ENCODE measurements at regions of chr3 and their contacts with region 1.

Region 1: DNA sequence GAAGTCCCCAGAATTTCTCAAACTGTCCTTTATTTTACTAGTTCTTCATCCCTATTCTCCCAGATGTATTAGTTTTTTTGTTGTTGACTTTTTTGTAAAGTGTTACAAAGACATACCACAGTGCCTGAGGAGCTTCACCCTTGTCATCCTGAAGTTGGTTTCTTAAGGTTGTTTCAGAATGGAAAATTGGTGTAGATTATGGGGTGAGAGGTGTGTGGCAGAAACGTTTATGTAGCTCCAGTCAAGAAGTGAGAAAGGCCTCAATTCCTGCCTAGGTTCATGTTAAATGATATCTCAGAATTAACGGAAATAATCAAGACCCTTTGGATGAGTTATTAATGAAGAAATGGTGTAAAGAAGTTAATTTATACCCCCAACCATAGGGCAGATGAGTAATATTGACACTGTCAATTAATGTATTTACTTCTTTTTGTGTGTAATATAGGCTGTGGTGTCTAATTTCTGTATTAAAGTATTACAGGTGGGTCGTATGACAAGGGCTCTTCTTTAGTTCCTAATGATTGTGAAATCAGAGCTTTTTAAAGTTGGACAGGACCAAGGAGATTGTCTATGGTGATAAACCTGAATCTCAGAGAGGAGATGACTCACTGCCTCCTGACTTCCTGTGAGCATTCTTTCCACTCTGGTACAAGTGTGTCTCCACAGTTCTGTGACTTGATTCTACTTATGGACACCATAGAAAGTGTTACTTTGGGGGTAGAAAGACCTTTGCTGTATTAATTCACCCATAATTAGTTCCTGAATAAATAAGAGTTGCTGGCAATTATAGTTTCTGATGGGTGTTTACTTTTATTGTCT is 7.0 kb downstream of the EDEM1 start:
- DNase-seq: peak; percentile 47
- H3K4me3 Mint-ChIP-seq: peak overlapping the region; percentile 62
- H3K27ac Mint-ChIP-seq: peak overlapping the region; percentile 94
- H3K4me1 Mint-ChIP-seq: peaks cover 85% of the 10 kb centered on the region
- H3K27me3 Mint-ChIP-seq: no peaks in the 10 kb centered on the region

Region 2: GRCh38 chr3:3443482-3443881 is 1751.1 kb before region 1 on chr3:
- intact Hi-C with region 1: no loop called
- DNase-seq: no peak
- H3K4me3 Mint-ChIP-seq: no peak overlapping the region
- H3K27ac Mint-ChIP-seq: no peak overlapping the region
- H3K4me1 Mint-ChIP-seq: no peaks in the 10 kb centered on the region
- H3K27me3 Mint-ChIP-seq: no peaks in the 10 kb centered on the region

Region 3: GRCh38 chr3:4303187-4304123 is 891.1 kb before region 1 on chr3 and contains the start of gene SETMAR:
- intact Hi-C with region 1: loop called (anchors 10 kb)
- DNase-seq: peak; percentile 75
- H3K4me3 Mint-ChIP-seq: peak within 1 kb of the TSS; percentile 90
- H3K27ac Mint-ChIP-seq: peak within 1 kb of the TSS; percentile 95
- H3K4me1 Mint-ChIP-seq: peaks cover 22% of the 10 kb centered on the region
- H3K27me3 Mint-ChIP-seq: peaks cover 4% of the 10 kb centered on the region
- total RNA-seq, gene SETMAR: 16.0 and 17.6 TPM in 2 replicates

Region 4: GRCh38 chr3:4406746-4407568 is 787.6 kb before region 1 on chr3:
- intact Hi-C with region 1: loop called (anchors 5 kb)
- DNase-seq: no peak
- H3K4me3 Mint-ChIP-seq: no peak overlapping the region
- H3K27ac Mint-ChIP-seq: peak overlapping the region; percentile 47
- H3K4me1 Mint-ChIP-seq: peaks cover 75% of the 10 kb centered on the region
- H3K27me3 Mint-ChIP-seq: no peaks in the 10 kb centered on the region

Region 5: GRCh38 chr3:4834403-4834866 is 360.1 kb before region 1 on chr3:
- intact Hi-C with region 1: loop called (anchors 5 kb)
- DNase-seq: peak; percentile 74
- H3K4me3 Mint-ChIP-seq: peak overlapping the region; percentile 74
- H3K27ac Mint-ChIP-seq: peak overlapping the region; percentile 96
- H3K4me1 Mint-ChIP-seq: peaks cover 80% of the 10 kb centered on the region
- H3K27me3 Mint-ChIP-seq: no peaks in the 10 kb centered on the region

Region 6: DNA sequence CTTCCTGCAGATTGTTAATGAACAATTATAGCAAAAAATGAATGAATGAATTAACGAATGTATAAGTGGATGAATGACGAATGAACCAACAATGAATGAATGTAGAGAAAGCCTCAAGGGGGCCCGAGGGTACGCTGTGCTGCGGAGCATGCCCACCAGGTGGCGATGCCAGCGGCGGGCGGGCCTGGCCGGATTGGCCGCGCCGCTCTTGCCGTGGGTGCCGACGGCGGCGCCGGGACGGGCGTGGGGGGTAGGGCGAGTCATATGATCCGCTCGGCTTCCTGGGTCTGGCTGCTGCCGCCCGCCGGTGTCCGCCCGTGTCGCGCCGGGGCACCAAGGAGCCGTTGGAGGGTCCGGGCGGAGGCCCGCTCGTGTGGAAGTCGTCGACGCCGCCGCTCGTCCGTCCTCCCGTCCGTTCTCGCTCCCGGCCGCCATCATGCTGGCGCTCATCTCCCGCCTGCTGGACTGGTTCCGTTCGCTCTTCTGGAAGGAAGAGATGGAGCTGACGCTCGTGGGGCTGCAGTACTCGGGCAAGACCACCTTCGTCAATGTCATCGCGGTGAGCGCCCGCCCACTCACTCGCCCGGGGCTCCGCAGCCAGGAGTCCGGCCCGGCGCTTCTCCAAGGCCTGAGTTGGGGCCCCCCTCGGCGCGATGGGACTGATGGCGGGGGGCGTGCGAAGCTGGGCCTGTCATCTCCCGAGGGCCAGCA is 72.4 kb before region 1 on chr3 and contains the start of gene ARL8B:
- intact Hi-C with region 1: loop called (anchors 2 kb)
- DNase-seq: peak; percentile 88
- H3K4me3 Mint-ChIP-seq: peak within 1 kb of the TSS; percentile 95
- H3K27ac Mint-ChIP-seq: peak within 1 kb of the TSS; percentile 83
- H3K4me1 Mint-ChIP-seq: peaks cover 28% of the 10 kb centered on the region
- H3K27me3 Mint-ChIP-seq: no peaks in the 10 kb centered on the region
- total RNA-seq, gene ARL8B: 37.9 and 40.6 TPM in 2 replicates

Region 7: DNA sequence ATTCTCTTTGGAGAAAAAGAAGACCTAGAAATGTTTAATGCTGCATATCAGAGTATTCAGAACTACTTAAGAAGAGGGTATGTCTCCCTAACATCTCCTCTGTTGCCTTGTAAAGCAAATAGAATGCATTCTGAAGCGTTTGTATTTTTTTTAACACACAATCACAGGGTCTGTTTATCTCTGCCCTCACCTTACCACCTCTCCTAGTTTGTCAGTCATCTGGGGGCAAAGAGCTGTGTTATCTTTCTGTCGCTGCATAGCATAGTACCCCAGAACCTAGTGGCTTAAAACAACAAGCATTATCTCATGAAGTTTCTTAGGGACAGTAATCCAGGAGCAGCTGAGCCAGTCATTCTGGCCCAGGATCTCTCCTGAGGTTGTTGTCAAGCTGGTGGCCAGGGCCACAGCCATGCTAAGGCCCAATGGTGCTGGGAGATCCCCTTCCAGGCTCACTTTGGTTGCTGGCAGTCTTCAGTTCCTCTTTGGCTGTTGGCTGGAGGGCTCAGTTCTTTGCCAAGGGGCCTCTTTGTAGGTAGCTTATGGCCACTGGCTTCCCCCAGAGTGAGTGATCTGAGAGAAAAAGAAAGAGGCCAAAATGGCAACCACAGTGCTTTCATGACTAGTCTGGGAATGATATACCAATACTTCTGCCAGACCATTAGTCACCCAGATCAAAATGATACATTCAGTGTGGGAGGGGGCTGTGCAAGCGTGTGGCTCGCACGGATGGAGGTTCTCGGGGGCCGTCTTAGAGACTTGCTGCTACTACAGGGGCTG is 10.8 kb after region 1 on chr3:
- intact Hi-C with region 1: loop called (anchors 1 kb)
- DNase-seq: no peak
- H3K4me3 Mint-ChIP-seq: no peak overlapping the region
- H3K27ac Mint-ChIP-seq: peak overlapping the region; percentile 67
- H3K4me1 Mint-ChIP-seq: peaks cover 17% of the 10 kb centered on the region
- H3K27me3 Mint-ChIP-seq: no peaks in the 10 kb centered on the region

Region 8: GRCh38 chr3:5390221-5390620 is 195.7 kb after region 1 on chr3:
- intact Hi-C with region 1: no loop called
- DNase-seq: no peak
- H3K4me3 Mint-ChIP-seq: no peak overlapping the region
- H3K27ac Mint-ChIP-seq: no peak overlapping the region
- H3K4me1 Mint-ChIP-seq: no peaks in the 10 kb centered on the region
- H3K27me3 Mint-ChIP-seq: peaks cover 1% of the 10 kb centered on the region